Caco-2 (cell line): ENCODE measurements at regions of chr1 and their contacts with region 1.

Region 1: DNA sequence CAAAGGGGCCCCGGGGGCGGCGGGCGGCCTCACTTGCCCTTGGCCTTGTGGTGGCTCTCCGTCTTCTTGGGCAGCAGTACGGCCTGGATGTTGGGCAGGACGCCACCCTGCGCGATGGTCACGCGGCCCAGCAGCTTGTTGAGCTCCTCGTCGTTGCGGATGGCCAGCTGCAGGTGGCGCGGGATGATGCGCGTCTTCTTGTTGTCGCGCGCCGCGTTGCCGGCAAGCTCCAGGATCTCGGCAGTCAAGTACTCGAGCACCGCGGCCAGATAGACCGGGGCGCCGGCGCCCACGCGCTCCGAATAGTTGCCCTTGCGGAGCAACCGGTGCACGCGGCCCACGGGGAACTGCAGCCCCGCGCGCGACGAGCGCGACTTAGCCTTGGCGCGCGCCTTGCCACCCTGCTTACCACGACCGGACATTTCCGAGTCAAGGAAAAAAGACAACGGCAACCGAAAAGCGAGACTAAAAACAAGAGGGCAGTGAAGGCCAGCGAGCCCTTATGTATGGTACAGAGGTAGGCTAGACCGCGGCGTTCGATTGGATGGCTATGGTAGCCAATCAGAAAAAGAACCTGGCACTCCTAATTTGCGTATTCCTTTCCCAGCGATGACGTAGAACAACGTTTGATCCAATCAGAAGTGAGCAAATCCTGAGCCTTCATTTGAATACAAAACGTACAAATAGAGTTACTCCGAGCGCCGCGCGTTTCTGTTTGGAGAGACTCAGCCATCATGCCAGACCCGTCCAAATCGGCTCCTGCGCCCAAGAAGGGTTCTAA is 29.6 kb upstream of the RNF187 start:
- DNase-seq: peak; percentile 94 to 95
- H3K4me3 ChIP-seq: peak overlapping the region; percentile 72
- H3K4me3 Mint-ChIP-seq: peak overlapping the region; percentile 93
- H3K27ac Mint-ChIP-seq: peak overlapping the region; percentile 93
- H3K4me1 ChIP-seq: peaks cover 21% of the 10 kb centered on the region
- H3K4me1 Mint-ChIP-seq: peaks cover 23% of the 10 kb centered on the region
- H3K27me3 ChIP-seq: no peaks in the 10 kb centered on the region
- H3K27me3 Mint-ChIP-seq: no peaks in the 10 kb centered on the region
- CTCF ChIP-seq: peak; percentile 26 to 57

Region 2: GRCh38 chr1:228212966-228213844 is 244.4 kb before region 1 on chr1:
- CTCF ChIA-PET with region 1: no interaction called
- POLR2A ChIA-PET with region 1: no interaction called
- intact Hi-C with region 1: loop called (anchors 2 kb)
- DNase-seq: peak; percentile 83 to 87
- H3K4me3 ChIP-seq: peak overlapping the region; percentile 54
- H3K4me3 Mint-ChIP-seq: peak overlapping the region; percentile 73
- H3K27ac Mint-ChIP-seq: no peak overlapping the region
- H3K4me1 ChIP-seq: no peaks in the 10 kb centered on the region
- H3K4me1 Mint-ChIP-seq: no peaks in the 10 kb centered on the region
- H3K27me3 ChIP-seq: no peaks in the 10 kb centered on the region
- H3K27me3 Mint-ChIP-seq: no peaks in the 10 kb centered on the region
- CTCF ChIP-seq: peak; percentile 39 to 82

Region 3: GRCh38 chr1:228285661-228286504 is 171.7 kb before region 1 on chr1:
- CTCF ChIA-PET with region 1: no interaction called
- POLR2A ChIA-PET with region 1: no interaction called
- intact Hi-C with region 1: no loop called
- DNase-seq: peak in 1 of 2 experiments; percentile 22
- H3K4me3 ChIP-seq: no peak overlapping the region
- H3K4me3 Mint-ChIP-seq: no peak overlapping the region
- H3K27ac Mint-ChIP-seq: no peak overlapping the region
- H3K4me1 ChIP-seq: no peaks in the 10 kb centered on the region
- H3K4me1 Mint-ChIP-seq: no peaks in the 10 kb centered on the region
- H3K27me3 ChIP-seq: no peaks in the 10 kb centered on the region
- H3K27me3 Mint-ChIP-seq: peaks cover 11% of the 10 kb centered on the region
- CTCF ChIP-seq: no peak

Region 4: DNA sequence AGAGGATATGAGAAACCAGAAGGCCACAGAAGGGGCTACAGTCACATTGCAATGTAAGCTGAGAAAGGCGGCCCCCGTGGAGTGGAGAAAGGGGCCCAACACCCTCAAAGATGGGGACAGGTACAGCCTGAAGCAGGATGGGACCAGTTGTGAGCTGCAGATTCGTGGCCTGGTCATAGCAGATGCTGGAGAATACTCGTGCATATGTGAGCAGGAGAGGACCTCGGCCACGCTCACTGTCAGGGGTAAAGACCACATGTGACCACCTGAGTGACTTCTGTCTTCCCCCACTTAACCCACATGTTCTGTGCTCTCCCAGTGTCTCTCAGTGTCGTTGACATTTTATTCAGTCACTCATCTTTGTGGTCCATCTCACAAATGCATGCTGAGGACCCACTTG is 157.7 kb before region 1 on chr1:
- CTCF ChIA-PET with region 1: no interaction called
- POLR2A ChIA-PET with region 1: no interaction called
- intact Hi-C with region 1: no loop called
- DNase-seq: no peak
- H3K4me3 ChIP-seq: no peak overlapping the region
- H3K4me3 Mint-ChIP-seq: no peak overlapping the region
- H3K27ac Mint-ChIP-seq: no peak overlapping the region
- H3K4me1 ChIP-seq: no peaks in the 10 kb centered on the region
- H3K4me1 Mint-ChIP-seq: no peaks in the 10 kb centered on the region
- H3K27me3 ChIP-seq: no peaks in the 10 kb centered on the region; the same call in 1 of the 2 replicates
- H3K27me3 Mint-ChIP-seq: no peaks in the 10 kb centered on the region
- CTCF ChIP-seq: no peak

Region 5: GRCh38 chr1:228358039-228358763 is 99.4 kb before region 1 on chr1:
- CTCF ChIA-PET with region 1: no interaction called
- POLR2A ChIA-PET with region 1: no interaction called
- intact Hi-C with region 1: no loop called
- DNase-seq: no peak
- H3K4me3 ChIP-seq: no peak overlapping the region
- H3K4me3 Mint-ChIP-seq: no peak overlapping the region
- H3K27ac Mint-ChIP-seq: no peak overlapping the region
- H3K4me1 ChIP-seq: no peaks in the 10 kb centered on the region
- H3K4me1 Mint-ChIP-seq: no peaks in the 10 kb centered on the region
- H3K27me3 ChIP-seq: no peaks in the 10 kb centered on the region
- H3K27me3 Mint-ChIP-seq: no peaks in the 10 kb centered on the region
- CTCF ChIP-seq: no peak

Region 6: DNA sequence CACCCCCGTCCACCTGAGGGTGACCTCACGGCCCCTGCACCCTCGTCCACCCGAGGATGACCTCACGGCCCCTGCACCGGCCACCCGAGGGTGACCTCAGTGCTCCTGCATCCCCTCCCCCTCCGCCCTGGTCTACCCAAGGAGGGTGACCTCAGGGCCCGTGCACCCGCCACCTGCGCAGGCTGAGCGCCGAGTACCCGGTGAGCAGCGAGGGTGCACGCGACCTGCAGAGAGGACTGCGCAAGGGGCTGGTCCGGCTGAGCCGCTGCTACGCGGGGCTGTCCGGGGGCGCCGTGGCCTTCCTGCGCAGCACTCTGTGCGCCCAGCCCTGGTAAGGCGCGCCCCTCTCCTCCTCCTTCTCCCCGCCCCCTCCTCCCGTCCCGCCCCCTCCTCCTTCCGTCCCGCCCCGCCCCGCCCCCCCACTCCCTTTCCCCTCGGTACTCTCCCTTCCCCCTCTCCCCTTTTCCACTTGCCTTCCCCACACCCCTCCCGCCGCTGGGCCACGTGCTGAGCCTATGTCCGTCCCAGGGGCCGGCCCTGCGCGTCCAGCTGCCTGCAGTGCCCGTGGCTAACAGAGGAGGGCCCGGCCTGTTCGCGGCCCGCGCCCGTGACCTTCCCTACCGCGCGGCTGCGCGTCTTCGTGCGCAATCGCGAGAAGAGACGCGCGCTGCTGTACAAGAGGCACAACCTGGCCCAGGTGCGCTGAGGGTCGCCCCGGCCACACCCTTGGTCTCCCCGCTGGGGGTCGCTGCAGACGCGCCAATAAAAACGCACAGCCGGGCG is 79.3 kb before region 1 on chr1:
- CTCF ChIA-PET with region 1: no interaction called
- POLR2A ChIA-PET with region 1: no interaction called
- intact Hi-C with region 1: loop called (anchors 1 kb)
- DNase-seq: peak; percentile 68 to 73
- H3K4me3 ChIP-seq: peak overlapping the region; percentile 40
- H3K4me3 Mint-ChIP-seq: peak overlapping the region; percentile 66
- H3K27ac Mint-ChIP-seq: no peak overlapping the region
- H3K4me1 ChIP-seq: no peaks in the 10 kb centered on the region
- H3K4me1 Mint-ChIP-seq: no peaks in the 10 kb centered on the region
- H3K27me3 ChIP-seq: no peaks in the 10 kb centered on the region
- H3K27me3 Mint-ChIP-seq: no peaks in the 10 kb centered on the region
- CTCF ChIP-seq: peak; percentile 34 to 47

Region 7: GRCh38 chr1:228405987-228406265 is 51.7 kb before region 1 on chr1:
- CTCF ChIA-PET with region 1: interaction called, 7 read pairs
- POLR2A ChIA-PET with region 1: interaction called, 14 read pairs
- intact Hi-C with region 1: loop called (anchors 1 kb)
- DNase-seq: no peak
- H3K4me3 ChIP-seq: peak overlapping the region; percentile 99
- H3K4me3 Mint-ChIP-seq: peak overlapping the region; percentile 95
- H3K27ac Mint-ChIP-seq: peak overlapping the region; percentile 93
- H3K4me1 ChIP-seq: peaks cover 26% of the 10 kb centered on the region
- H3K4me1 Mint-ChIP-seq: peaks cover 20% of the 10 kb centered on the region
- H3K27me3 ChIP-seq: no peaks in the 10 kb centered on the region
- H3K27me3 Mint-ChIP-seq: no peaks in the 10 kb centered on the region
- CTCF ChIP-seq: no peak

Region 8: DNA sequence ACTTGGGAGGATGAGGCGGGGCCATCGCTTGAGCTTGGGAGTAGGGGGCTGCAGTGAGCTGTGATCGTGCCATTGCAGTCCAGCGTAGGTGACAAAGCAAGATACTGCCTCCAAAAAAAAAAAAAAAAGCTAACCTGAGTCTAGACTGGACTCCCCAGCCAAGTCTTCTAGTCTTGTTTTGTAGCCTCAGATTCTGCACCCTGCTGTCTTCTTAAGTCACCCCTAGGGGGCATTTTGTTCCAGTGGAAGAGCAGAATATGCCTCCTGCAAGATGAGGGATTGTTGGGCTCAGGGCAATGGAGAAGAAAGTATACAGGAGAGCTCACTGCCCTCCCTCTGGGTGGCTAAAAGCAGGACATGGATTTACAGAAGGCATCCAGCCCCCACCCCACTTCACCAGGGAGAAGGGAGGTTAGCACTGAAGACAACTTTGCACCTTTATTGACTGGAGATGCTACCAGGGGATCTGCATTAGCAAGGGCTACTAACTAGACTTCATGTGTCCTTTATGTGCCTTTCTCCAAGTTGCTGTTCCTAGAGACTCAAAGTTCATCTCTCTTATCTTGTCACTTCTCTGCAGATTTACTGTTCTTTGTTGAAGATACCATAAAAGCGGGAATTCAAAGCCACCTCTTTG is 14.3 kb after region 1 on chr1:
- CTCF ChIA-PET with region 1: interaction called, 7 read pairs
- POLR2A ChIA-PET with region 1: interaction called, 5 read pairs
- intact Hi-C with region 1: loop called (anchors 1 kb)
- DNase-seq: peak in 1 of 2 experiments; percentile 62
- H3K4me3 ChIP-seq: no peak overlapping the region
- H3K4me3 Mint-ChIP-seq: no peak overlapping the region
- H3K27ac Mint-ChIP-seq: peak overlapping the region; percentile 11
- H3K4me1 ChIP-seq: peaks cover 24% of the 10 kb centered on the region
- H3K4me1 Mint-ChIP-seq: peaks cover 22% of the 10 kb centered on the region
- H3K27me3 ChIP-seq: no peaks in the 10 kb centered on the region
- H3K27me3 Mint-ChIP-seq: no peaks in the 10 kb centered on the region
- CTCF ChIP-seq: peak; percentile 54 to 70

Region 9: GRCh38 chr1:228500901-228501871 is 43.6 kb after region 1 on chr1:
- CTCF ChIA-PET with region 1: no interaction called
- POLR2A ChIA-PET with region 1: no interaction called
- intact Hi-C with region 1: loop called (anchors 5 kb)
- DNase-seq: peak; percentile 82 to 86
- H3K4me3 ChIP-seq: no peak overlapping the region
- H3K4me3 Mint-ChIP-seq: peak overlapping the region; percentile 25
- H3K27ac Mint-ChIP-seq: no peak overlapping the region
- H3K4me1 ChIP-seq: no peaks in the 10 kb centered on the region
- H3K4me1 Mint-ChIP-seq: no peaks in the 10 kb centered on the region
- H3K27me3 ChIP-seq: no peaks in the 10 kb centered on the region
- H3K27me3 Mint-ChIP-seq: no peaks in the 10 kb centered on the region
- CTCF ChIP-seq: peak; percentile 84 to 88

Region 10: GRCh38 chr1:228814176-228814575 is 356.6 kb after region 1 on chr1:
- CTCF ChIA-PET with region 1: no interaction called
- POLR2A ChIA-PET with region 1: no interaction called
- intact Hi-C with region 1: no loop called
- DNase-seq: no peak
- H3K4me3 ChIP-seq: no peak overlapping the region
- H3K4me3 Mint-ChIP-seq: no peak overlapping the region
- H3K27ac Mint-ChIP-seq: no peak overlapping the region
- H3K4me1 ChIP-seq: peaks cover 16% of the 10 kb centered on the region
- H3K4me1 Mint-ChIP-seq: peaks cover 15% of the 10 kb centered on the region
- H3K27me3 ChIP-seq: no peaks in the 10 kb centered on the region
- H3K27me3 Mint-ChIP-seq: no peaks in the 10 kb centered on the region
- CTCF ChIP-seq: no peak